Activated CD4-positive, alpha-beta T cell treated with anti-CD3 and anti-CD28 coated beads, Interleukin-2, amount 10 ng/mL, durations not matched to agents 24 days and 14 days (primary cell): ENCODE measurements at regions of chr17 and their contacts with region 1.

Region 1: DNA sequence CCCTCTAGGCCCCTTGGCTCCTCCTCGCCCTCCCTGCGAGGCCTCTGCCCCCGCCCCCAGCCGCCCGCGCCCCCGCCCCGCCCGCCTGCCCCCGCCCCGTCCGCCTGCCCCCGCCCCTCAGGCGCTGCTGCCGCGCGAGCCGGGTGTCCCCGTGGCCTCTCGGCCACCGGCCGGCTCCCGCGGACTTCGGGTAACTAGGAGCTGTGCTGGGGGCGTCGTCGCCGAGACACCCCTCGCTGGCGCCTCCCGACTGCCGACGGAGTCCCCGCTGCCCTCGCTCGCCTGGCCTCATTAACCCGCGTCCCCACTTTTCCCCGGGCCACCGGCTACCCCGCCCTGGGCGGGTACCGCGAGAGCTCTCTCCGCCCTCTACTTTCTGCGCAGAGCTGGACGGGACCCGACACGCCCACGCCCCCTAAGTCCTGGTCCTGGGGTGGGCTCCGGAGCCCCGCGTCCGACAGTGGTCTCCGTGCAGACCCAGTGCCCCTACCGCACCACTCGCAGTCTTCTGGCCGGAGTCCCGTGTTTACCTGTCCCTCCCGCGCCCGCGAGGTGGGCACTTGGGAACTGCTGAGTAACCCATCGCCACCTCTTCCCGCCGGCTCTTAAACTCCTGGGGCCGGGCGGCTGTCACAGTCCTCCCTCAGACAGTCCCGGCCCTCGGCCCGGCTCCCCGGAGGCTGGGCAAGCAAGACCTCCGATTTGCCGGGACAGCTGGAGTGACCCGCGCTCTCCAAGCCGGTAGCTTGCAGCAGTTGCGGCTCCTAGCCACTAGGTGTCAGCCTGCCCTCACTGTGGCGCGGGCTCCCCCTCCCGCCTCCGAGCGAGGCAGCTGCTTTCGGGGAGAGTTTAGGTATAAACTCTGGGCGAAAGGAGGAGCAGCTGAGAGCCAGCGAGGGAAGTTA is at the start of gene TLCD1:
- DNase-seq: peak; percentile 98
- H3K4me3 Mint-ChIP-seq: peak within 1 kb of the TSS; percentile 98
- H3K27ac Mint-ChIP-seq: peak within 1 kb of the TSS; percentile 100
- H3K4me1 Mint-ChIP-seq: peaks cover 53% of the 10 kb centered on the region
- H3K27me3 Mint-ChIP-seq: no peaks in the 10 kb centered on the region
- total RNA-seq, gene TLCD1: 12.5 and 16.8 TPM in 2 replicates

Region 2: GRCh38 chr17:28612531-28612930 is 113.9 kb before region 1 on chr17:
- intact Hi-C with region 1: no loop called
- DNase-seq: no peak
- H3K4me3 Mint-ChIP-seq: no peak overlapping the region
- H3K27ac Mint-ChIP-seq: no peak overlapping the region
- H3K4me1 Mint-ChIP-seq: peaks cover 4% of the 10 kb centered on the region
- H3K27me3 Mint-ChIP-seq: no peaks in the 10 kb centered on the region

Region 3: GRCh38 chr17:28750178-28751047 is 23.9 kb after region 1 on chr17:
- intact Hi-C with region 1: loop called (anchors 1 kb)
- DNase-seq: peak; percentile 97
- H3K4me3 Mint-ChIP-seq: no peak overlapping the region
- H3K27ac Mint-ChIP-seq: peak overlapping the region; percentile 37
- H3K4me1 Mint-ChIP-seq: peaks cover 20% of the 10 kb centered on the region
- H3K27me3 Mint-ChIP-seq: no peaks in the 10 kb centered on the region

Region 4: GRCh38 chr17:28812091-28812747 is 85.7 kb after region 1 on chr17:
- intact Hi-C with region 1: loop called (anchors 2 kb)
- DNase-seq: peak; percentile 99
- H3K4me3 Mint-ChIP-seq: peak overlapping the region; percentile 85
- H3K27ac Mint-ChIP-seq: peak overlapping the region; percentile 97
- H3K4me1 Mint-ChIP-seq: peaks cover 36% of the 10 kb centered on the region
- H3K27me3 Mint-ChIP-seq: no peaks in the 10 kb centered on the region

Region 5: DNA sequence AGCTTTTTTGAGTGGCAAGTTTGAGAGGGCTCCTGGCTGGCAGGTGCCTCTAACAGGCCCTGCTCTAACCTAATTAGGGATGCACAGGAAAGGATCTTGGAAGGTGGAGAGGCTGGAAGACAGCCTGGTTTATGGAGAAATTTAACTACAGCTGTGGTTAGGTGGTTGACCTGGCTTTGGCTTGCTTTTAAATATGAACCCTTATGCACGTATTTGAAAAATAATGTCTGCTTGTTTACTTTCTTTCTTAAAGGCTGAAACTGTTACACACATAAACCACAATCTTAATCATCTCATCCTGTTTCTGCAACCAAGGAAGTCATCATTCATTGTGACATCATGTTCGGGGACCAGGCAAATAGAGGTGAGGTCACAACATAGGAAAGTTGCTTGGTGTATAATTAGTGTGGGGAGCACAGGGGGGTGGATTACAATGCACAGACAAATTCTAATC is 199.5 kb after region 1 on chr17:
- intact Hi-C with region 1: loop called (anchors 1 kb)
- DNase-seq: peak; percentile 89
- H3K4me3 Mint-ChIP-seq: peak overlapping the region; percentile 54
- H3K27ac Mint-ChIP-seq: peak overlapping the region; percentile 93
- H3K4me1 Mint-ChIP-seq: peaks cover 52% of the 10 kb centered on the region
- H3K27me3 Mint-ChIP-seq: no peaks in the 10 kb centered on the region

Region 6: GRCh38 chr17:29116804-29117772 is 390.6 kb after region 1 on chr17:
- intact Hi-C with region 1: loop called (anchors 2 kb)
- DNase-seq: peak; percentile 92
- H3K4me3 Mint-ChIP-seq: no peak overlapping the region
- H3K27ac Mint-ChIP-seq: no peak overlapping the region
- H3K4me1 Mint-ChIP-seq: peaks cover 8% of the 10 kb centered on the region
- H3K27me3 Mint-ChIP-seq: no peaks in the 10 kb centered on the region

Region 7: DNA sequence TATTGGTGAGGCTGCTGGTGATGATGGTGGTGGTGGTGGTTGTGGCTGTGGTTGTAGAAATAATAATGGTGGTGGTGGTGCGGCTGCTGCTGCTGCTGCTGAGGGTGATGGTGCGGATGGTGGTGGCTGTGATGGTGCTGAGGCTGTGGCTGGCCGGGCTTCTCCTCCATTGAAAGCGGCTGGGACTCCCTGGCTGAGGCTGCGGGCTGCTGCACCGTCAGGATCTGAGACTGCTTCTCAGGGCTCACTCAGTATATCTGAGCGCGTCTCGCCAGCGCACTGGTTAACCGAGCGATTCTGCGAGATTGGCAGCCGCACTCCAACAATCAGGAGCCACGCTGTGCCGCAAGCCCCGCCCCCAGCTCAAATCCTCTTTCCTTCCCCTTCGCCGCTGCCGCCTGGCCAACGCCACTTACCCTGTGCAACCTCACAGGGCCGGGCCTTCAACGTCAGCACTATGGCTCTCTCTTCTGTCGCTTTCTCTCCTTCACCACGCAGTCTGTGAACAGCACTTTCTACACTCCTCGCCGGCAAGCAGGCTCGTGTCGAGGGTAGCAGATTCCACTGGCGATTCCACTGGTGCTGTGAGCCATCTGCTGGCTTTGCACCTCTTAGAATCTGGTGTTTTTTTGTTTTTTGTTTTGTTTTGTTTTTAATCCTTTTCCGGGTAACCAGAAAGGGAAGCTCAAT is 567.6 kb after region 1 on chr17 and contains the start of gene NUFIP2:
- intact Hi-C with region 1: loop called (anchors 5 kb)
- DNase-seq: peak; percentile 99
- H3K4me3 Mint-ChIP-seq: peak within 1 kb of the TSS; percentile 99
- H3K27ac Mint-ChIP-seq: peak within 1 kb of the TSS; percentile 99
- H3K4me1 Mint-ChIP-seq: peaks cover 28% of the 10 kb centered on the region
- H3K27me3 Mint-ChIP-seq: no peaks in the 10 kb centered on the region
- total RNA-seq, gene NUFIP2: 83.2 and 89.7 TPM in 2 replicates

Region 8: GRCh38 chr17:29664743-29665480 is 938.4 kb after region 1 on chr17:
- intact Hi-C with region 1: no loop called
- DNase-seq: no peak
- H3K4me3 Mint-ChIP-seq: peak overlapping the region; percentile 15
- H3K27ac Mint-ChIP-seq: peak overlapping the region; percentile 77
- H3K4me1 Mint-ChIP-seq: peaks cover 25% of the 10 kb centered on the region
- H3K27me3 Mint-ChIP-seq: no peaks in the 10 kb centered on the region